GM23248 (cell line): ENCODE measurements at regions of chr17 and their contacts with region 1.

Region 1: DNA sequence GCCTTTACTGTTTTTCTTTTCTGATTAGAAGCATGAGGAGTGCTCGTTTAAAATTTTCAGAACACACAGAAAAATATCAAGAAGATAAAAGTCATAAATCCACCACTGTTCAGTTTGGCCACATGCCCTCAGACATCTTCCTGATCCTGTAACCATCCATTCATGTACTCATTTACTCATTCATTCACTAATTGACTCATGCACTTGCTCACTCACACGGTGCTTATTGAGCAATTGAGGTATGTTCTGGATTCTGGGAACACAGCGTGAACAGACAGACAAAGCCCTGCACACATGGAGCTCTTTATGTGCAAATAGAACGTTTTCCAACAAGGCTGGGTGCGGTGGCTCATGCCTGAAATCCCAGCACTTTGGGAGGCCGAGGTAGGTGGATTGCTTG is 10.1 kb upstream of the NATD1 start:
- DNase-seq: peak; percentile 90
- H3K4me3 ChIP-seq: no peak overlapping the region
- H3K27ac ChIP-seq: peak overlapping the region; percentile 46; the same call in 1 of the 2 replicates
- H3K4me1 ChIP-seq: no peaks in the 10 kb centered on the region
- H3K27me3 ChIP-seq: no peaks in the 10 kb centered on the region

Region 2: GRCh38 chr17:21126645-21127510 is 136.5 kb before region 1 on chr17 and contains the start of gene DHRS7B:
- in situ Hi-C with region 1: loop called (anchors 10 kb)
- DNase-seq: peak; percentile 96
- H3K4me3 ChIP-seq: peak within 1 kb of the TSS; percentile 94
- H3K27ac ChIP-seq: peak within 1 kb of the TSS; percentile 88
- H3K4me1 ChIP-seq: peaks cover 3% of the 10 kb centered on the region; the same call in 1 of the 2 replicates
- H3K27me3 ChIP-seq: no peaks in the 10 kb centered on the region
- total RNA-seq, gene DHRS7B: 34.7 and 34.8 TPM in 2 replicates

Region 3: GRCh38 chr17:21318439-21318838 is 55.1 kb after region 1 on chr17:
- in situ Hi-C with region 1: no loop called
- DNase-seq: no peak
- H3K4me3 ChIP-seq: no peak overlapping the region
- H3K27ac ChIP-seq: no peak overlapping the region
- H3K4me1 ChIP-seq: no peaks in the 10 kb centered on the region
- H3K27me3 ChIP-seq: no peaks in the 10 kb centered on the region

Region 4: DNA sequence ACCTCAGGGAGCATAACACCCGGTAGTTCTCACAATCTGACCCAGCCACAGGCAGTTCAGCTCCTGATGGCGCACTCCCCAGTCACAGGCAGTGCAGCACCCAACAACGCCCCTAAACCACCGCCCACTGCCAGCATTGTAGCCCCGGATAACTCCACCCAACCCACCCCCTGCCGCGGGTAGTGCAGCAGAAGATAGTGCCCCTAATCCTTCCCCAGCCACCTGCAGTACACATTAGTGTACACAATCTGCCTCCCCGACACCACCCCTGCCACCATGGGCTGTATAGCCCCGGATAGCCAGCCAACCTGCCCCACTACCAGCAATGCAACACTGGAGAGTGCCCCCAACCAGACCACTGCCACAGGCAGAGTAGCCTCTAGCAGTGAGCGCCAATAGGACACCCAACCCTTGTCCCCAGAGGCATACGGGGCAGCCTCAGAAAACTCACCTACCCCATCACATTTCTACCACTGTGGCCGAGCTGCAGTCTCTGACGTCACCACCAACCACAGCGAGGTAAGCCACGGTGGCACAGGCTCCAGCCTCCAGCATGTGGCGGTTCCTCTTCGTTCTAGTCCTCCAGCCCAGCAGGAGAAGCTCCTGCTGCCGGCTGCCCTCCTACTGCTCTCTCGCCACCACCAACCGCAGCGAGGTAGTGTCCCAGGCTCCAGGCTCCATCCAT is 1306.2 kb after region 1 on chr17:
- in situ Hi-C with region 1: no loop called
- DNase-seq: no peak
- H3K4me3 ChIP-seq: no peak overlapping the region
- H3K27ac ChIP-seq: no peak overlapping the region
- H3K4me1 ChIP-seq: no peaks in the 10 kb centered on the region
- H3K27me3 ChIP-seq: no peaks in the 10 kb centered on the region